Calu3 (cell line): ENCODE measurements at regions of chr5 and their contacts with region 1.

Region 1: DNA sequence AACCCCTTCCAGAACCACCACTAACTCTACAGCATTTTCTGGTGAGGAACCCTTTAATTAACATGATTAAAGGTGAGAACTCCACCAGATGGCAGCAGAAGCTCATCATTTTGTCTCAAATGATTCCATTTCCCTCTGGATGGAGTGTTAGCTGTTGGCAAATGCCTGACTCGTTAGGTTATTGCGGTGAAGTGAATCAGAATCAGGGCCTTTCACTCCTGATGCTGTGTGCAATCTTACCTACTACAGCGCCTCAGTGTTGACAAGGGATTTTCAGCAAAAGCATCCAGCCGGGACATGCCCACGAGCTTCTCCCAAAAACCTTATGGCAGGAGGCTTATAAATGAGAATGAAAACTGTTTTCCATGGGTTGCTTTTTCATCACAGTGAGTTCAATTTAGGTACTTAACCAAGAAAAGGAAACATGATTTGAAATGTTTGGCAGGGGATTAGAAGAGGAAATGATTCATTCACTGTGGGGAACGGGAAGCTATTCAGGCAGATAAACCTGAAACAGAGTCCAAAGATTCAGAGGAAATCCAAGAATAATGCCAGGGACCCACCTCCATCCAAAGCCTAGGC is 48.0 kb upstream of the CAST start:
- DNase-seq: peak; percentile 73
- H3K4me3 Mint-ChIP-seq: peak overlapping the region; percentile 29
- H3K27ac Mint-ChIP-seq: peak overlapping the region; percentile 34
- H3K4me1 Mint-ChIP-seq: peaks cover 34% of the 10 kb centered on the region
- H3K27me3 Mint-ChIP-seq: no peaks in the 10 kb centered on the region
- CTCF ChIP-seq: peak; percentile 68

Region 2: GRCh38 chr5:96662725-96663513 is 48.7 kb after region 1 on chr5:
- CTCF ChIA-PET with region 1: interaction called, 18 read pairs
- intact Hi-C with region 1: no loop called
- DNase-seq: peak; percentile 98
- H3K4me3 Mint-ChIP-seq: peak overlapping the region; percentile 97
- H3K27ac Mint-ChIP-seq: peak overlapping the region; percentile 79
- H3K4me1 Mint-ChIP-seq: peaks cover 62% of the 10 kb centered on the region
- H3K27me3 Mint-ChIP-seq: no peaks in the 10 kb centered on the region
- CTCF ChIP-seq: no peak

Region 3: DNA sequence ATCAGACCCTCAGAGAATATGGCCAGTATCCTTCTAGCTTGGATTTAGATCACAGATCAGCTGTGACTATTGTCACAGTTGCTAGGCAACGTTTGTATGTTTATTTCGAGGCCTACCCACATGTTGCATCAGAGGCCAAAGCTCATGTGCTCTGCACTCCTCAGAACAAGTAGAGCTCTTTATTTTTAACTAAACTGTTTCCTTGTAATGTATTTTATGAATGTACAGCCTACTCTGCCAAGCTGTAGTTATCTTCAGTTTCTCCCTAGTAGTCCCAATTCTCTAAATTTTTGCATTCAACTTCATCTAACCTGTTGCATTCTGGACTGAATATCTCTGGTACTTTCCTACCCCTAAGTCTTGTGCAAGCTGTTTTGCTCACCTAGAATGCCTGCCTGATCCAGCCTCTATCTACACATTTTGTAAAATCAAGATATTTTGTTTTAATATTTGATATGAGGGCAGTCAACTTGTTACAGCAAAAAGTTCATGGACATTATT is 100.8 kb after region 1 on chr5:
- CTCF ChIA-PET with region 1: interaction called, 11 read pairs
- intact Hi-C with region 1: no loop called
- DNase-seq: peak; percentile 82
- H3K4me3 Mint-ChIP-seq: peak overlapping the region; percentile 28
- H3K27ac Mint-ChIP-seq: peak overlapping the region; percentile 77
- H3K4me1 Mint-ChIP-seq: peaks cover 77% of the 10 kb centered on the region
- H3K27me3 Mint-ChIP-seq: no peaks in the 10 kb centered on the region
- CTCF ChIP-seq: no peak

Region 4: GRCh38 chr5:96752341-96753016 is 138.3 kb after region 1 on chr5:
- CTCF ChIA-PET with region 1: interaction called, 13 read pairs
- intact Hi-C with region 1: no loop called
- DNase-seq: peak; percentile 65
- H3K4me3 Mint-ChIP-seq: no peak overlapping the region
- H3K27ac Mint-ChIP-seq: no peak overlapping the region
- H3K4me1 Mint-ChIP-seq: peaks cover 18% of the 10 kb centered on the region
- H3K27me3 Mint-ChIP-seq: no peaks in the 10 kb centered on the region
- CTCF ChIP-seq: peak; percentile 32

Region 5: DNA sequence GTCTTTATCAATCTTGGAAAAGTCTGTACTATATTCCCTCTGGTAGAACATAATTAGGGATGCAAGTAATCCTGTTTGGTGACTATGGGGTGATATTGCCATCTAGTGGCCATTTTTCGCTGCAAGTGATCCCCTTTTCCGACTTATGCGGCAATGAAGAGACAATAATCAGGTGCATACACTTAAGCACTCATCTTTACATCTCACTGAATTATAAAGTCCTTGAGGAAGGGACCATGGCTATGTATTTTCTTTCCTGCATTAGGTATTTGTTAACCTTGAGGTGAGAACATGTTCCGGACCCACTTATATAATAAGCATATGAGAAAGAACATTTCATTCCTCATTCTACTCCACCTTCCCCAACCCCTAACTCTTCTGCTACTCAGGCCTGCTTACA is 547.8 kb after region 1 on chr5:
- CTCF ChIA-PET with region 1: interaction called, 3 read pairs
- intact Hi-C with region 1: loop called (anchors 2 kb)
- DNase-seq: peak; percentile 74
- H3K4me3 Mint-ChIP-seq: no peak overlapping the region
- H3K27ac Mint-ChIP-seq: no peak overlapping the region
- H3K4me1 Mint-ChIP-seq: peaks cover 21% of the 10 kb centered on the region
- H3K27me3 Mint-ChIP-seq: no peaks in the 10 kb centered on the region
- CTCF ChIP-seq: peak; percentile 92